T-cell (primary cell): ENCODE measurements at regions of chr12 and their contacts with region 1.

Region 1: GRCh38 chr12:69553627-69554248 is 31.5 kb upstream of the CCT2 start:
- DNase-seq: no peak
- ATAC-seq: no peak
- H3K4me3 ChIP-seq: no peak overlapping the region
- H3K4me3 Mint-ChIP-seq: no peak overlapping the region
- H3K27ac ChIP-seq: no peak overlapping the region
- H3K27ac Mint-ChIP-seq: no peak overlapping the region
- H3K4me1 ChIP-seq: no peaks in the 10 kb centered on the region
- H3K4me1 Mint-ChIP-seq: peaks cover 0 to 1% (median 0%) of the 10 kb centered on the region in 3 donors
- H3K27me3 ChIP-seq: no peaks in the 10 kb centered on the region
- H3K27me3 Mint-ChIP-seq: no peaks in the 10 kb centered on the region

Region 2: GRCh38 chr12:69419701-69420100 is 134.0 kb before region 1 on chr12:
- CTCF ChIA-PET with region 1: no interaction called
- POLR2A ChIA-PET with region 1: interaction called in 1 of 2 experiments, 14 read pairs
- DNase-seq: no peak
- ATAC-seq: no peak
- H3K4me3 ChIP-seq: no peak overlapping the region
- H3K4me3 Mint-ChIP-seq: no peak overlapping the region
- H3K27ac ChIP-seq: no peak overlapping the region
- H3K27ac Mint-ChIP-seq: no peak overlapping the region
- H3K4me1 ChIP-seq: no peaks in the 10 kb centered on the region
- H3K4me1 Mint-ChIP-seq: no peaks in the 10 kb centered on the region
- H3K27me3 ChIP-seq: no peaks in the 10 kb centered on the region
- H3K27me3 Mint-ChIP-seq: no peaks in the 10 kb centered on the region

Region 3: DNA sequence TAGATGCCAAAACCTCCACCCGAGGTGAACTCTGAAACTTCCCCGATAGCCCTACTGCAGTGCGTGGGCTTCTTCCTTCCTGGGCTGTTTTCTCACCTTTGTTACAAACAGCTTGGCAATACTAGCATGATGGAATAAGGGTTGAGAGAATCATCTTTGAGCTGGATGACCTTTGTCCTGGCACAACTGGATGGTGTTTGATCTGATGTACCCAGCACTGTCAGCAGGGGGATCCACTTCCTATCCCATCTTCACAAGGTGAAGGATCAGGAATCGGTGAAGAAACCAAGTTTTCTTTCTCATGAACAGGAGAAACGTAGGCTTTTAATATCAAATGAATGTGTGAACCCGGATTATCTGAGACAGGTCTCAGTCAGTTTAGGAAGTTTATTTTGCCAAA is 76.5 kb after region 1 on chr12:
- CTCF ChIA-PET with region 1: no interaction called
- POLR2A ChIA-PET with region 1: interaction called in 1 of 2 experiments, 11 read pairs
- DNase-seq: no peak
- ATAC-seq: no peak
- H3K4me3 ChIP-seq: no peak overlapping the region
- H3K4me3 Mint-ChIP-seq: no peak overlapping the region
- H3K27ac ChIP-seq: no peak overlapping the region
- H3K27ac Mint-ChIP-seq: no peak overlapping the region
- H3K4me1 ChIP-seq: no peaks in the 10 kb centered on the region
- H3K4me1 Mint-ChIP-seq: peaks cover 0 to 4% (median 0%) of the 10 kb centered on the region in 3 donors
- H3K27me3 ChIP-seq: peaks cover 0 to 14% of the 10 kb centered on the region in 2 experiments
- H3K27me3 Mint-ChIP-seq: peaks cover 0 to 5% of the 10 kb centered on the region in 2 donors